ENCODE measurements at regions of chr5 and their contacts with region 1.

Region 1: GRCh38 chr5:134758504-134759341 is at the start of gene DDX46:
- DNase-seq: peak; percentile 23
- H3K4me3 ChIP-seq: peak within 1 kb of the TSS; percentile 98
- CTCF ChIP-seq: peak; percentile 91

Region 2: DNA sequence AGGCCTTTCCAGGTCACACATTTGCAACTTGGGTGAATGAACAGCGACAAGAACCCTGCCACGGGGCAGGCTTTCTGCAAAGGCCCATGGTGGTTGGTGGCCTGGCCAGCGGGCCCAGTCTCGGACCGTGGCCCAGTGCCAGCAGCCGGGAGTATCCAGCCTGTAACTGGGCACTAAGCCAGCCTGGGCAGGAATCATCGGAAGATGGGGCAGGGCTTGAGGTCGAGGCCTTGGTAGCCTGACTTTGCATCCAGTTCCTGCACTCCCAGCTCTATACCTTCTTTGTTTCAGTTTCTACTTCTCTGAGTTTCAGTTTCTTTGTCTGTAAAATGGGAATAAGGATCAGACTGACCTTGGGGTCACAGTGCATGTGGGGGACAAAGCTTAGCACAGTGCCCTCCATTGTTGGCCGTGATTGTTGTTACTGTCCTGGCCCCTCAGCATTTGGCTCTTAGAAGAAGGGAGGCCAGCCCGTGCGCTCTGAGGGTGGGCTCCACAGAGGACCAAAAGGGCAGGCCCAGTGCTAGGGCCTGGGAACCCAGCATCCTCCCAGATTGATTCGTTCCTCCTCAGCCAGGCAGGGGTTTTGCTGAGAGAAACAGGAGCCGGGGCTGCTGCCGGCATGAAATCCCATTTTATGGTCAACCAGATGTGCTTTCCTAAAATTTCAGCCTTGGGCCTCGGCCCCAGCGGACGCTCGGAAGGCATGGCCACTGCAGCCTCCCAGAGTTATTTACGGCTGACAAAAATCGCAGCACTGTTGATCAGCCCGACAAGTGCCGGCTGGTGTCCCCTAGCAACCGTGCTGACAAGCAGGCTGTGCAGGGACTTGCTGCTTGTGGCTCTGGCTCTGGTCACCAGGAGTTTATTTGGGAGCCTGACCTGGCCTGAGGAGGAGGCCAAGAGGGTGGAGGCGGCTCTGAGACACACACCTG is 189.7 kb before region 1 on chr5:
- CTCF ChIA-PET with region 1: no interaction called
- POLR2A ChIA-PET with region 1: no interaction called
- DNase-seq: no peak
- H3K4me3 ChIP-seq: no peak overlapping the region
- CTCF ChIP-seq: no peak

Region 3: DNA sequence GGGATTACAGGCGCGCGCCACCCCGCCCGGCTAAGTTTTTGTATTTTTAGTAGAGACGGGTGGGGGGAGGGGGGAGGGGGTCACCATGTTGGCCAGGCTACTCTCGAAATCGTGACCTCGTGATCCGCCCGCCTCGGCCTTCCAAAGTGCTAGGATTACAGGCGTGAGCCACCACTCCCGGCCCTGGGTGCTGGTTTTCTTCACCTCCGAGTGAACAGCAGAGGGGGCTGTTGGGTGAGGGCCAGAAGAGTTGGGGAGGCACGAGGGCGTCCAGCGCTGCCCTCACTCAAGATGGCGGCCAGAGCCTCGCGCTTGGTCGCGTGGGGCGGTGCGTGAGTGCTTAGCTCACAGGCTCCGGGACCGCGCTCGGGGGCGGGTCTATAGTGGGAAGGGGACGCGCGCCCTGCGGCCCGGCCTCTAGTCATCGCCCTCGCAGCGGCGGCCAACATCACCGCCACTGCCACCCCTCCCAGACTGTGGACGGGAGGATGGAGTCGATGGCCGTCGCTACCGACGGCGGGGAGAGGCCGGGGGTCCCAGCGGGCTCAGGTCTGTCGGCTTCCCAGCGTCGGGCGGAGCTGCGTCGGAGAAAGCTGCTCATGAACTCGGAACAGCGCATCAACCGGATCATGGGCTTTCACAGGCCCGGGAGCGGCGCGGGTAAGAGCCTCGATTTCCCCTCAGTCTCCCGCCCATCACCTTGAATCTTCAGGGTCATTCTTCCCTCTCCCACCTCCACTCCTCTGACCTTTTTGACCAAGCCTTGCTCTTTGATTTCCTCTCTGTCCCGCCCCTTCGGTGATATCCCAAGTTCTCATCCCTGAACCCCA is 20.4 kb before region 1 on chr5 and contains the start of gene CAMLG:
- CTCF ChIA-PET with region 1: interaction called, 53 read pairs
- POLR2A ChIA-PET with region 1: no interaction called
- DNase-seq: peak; percentile 77
- H3K4me3 ChIP-seq: peak within 1 kb of the TSS; percentile 94
- CTCF ChIP-seq: peak; percentile 62

Region 4: DNA sequence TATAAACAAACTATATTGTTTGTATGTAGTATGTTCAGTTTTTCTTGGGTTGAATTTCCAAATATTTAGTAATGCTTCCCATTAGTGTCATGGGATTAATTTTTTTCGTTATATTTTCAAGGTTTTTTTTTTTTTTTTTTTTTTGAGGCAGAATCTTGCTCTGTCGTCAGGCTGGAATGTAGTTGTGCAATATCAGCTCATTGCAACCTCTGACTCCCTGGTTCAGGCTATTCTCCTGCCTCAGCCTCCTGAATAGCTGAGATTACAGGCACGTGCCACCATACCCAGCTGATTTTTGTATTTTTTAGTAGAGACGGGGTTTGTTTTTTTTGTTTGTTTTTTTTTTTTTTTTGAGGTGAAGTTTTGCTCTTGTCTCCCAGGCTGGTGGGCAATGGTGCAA is 10.5 kb after region 1 on chr5:
- CTCF ChIA-PET with region 1: interaction called, 11 read pairs
- POLR2A ChIA-PET with region 1: no interaction called
- DNase-seq: no peak
- H3K4me3 ChIP-seq: no peak overlapping the region
- CTCF ChIP-seq: no peak